ENCODE measurements at regions of chr5 and their contacts with region 1.

Region 1: GRCh38 chr5:160539431-160539830 is 117.8 kb downstream of the PTTG1 start:
- DNase-seq: peak; percentile 84
- H3K4me3 Mint-ChIP-seq: no peak overlapping the region
- H3K27ac Mint-ChIP-seq: no peak overlapping the region
- H3K4me1 Mint-ChIP-seq: peaks cover 24% of the 10 kb centered on the region
- H3K27me3 Mint-ChIP-seq: no peaks in the 10 kb centered on the region

Region 2: DNA sequence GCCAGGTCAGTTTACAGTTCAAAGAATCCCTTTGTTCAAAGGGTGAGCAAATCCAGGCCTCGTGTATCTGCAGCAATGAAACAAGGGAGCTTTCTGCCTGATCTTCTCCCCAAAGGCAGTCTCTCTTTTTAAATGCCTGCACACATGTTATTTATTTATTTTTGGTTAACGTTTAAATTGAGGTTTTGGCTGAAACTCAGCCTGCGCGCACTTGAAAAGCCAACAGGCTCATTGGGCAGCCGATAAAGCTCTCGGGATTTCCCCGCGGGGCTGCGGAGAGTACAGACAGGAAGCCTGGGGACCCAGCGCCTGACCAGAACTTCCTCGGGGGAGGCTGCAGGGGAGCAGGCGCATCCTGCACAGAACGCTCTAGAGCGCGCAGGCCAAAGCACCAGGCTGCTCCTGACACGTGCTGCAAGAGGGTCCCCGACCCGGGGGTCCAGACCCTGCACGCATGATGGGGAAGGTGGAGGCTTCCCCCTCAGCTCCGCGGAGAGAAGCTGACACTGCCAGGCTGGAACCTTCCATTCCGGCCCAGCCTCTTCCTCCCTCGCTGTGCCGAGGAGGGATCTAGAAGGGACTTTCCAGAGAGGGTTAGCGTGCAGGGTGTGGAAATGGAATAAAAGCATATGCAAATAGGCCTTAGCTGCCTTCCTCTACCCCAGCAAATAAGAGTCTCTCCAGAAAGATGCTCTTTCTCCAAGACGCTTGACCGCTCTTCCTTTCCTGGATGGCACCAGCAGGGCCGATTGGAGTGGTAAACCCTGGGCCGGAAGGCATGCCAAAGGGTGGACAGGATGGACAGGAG is 71.7 kb before region 1 on chr5:
- CTCF ChIA-PET with region 1: no interaction called
- POLR2A ChIA-PET with region 1: interaction called, 11 read pairs
- intact Hi-C with region 1: loop called (anchors 1 kb)
- DNase-seq: peak; percentile 91
- H3K4me3 Mint-ChIP-seq: peak overlapping the region; percentile 98
- H3K27ac Mint-ChIP-seq: peak overlapping the region; percentile 98
- H3K4me1 Mint-ChIP-seq: peaks cover 65% of the 10 kb centered on the region
- H3K27me3 Mint-ChIP-seq: no peaks in the 10 kb centered on the region

Region 3: DNA sequence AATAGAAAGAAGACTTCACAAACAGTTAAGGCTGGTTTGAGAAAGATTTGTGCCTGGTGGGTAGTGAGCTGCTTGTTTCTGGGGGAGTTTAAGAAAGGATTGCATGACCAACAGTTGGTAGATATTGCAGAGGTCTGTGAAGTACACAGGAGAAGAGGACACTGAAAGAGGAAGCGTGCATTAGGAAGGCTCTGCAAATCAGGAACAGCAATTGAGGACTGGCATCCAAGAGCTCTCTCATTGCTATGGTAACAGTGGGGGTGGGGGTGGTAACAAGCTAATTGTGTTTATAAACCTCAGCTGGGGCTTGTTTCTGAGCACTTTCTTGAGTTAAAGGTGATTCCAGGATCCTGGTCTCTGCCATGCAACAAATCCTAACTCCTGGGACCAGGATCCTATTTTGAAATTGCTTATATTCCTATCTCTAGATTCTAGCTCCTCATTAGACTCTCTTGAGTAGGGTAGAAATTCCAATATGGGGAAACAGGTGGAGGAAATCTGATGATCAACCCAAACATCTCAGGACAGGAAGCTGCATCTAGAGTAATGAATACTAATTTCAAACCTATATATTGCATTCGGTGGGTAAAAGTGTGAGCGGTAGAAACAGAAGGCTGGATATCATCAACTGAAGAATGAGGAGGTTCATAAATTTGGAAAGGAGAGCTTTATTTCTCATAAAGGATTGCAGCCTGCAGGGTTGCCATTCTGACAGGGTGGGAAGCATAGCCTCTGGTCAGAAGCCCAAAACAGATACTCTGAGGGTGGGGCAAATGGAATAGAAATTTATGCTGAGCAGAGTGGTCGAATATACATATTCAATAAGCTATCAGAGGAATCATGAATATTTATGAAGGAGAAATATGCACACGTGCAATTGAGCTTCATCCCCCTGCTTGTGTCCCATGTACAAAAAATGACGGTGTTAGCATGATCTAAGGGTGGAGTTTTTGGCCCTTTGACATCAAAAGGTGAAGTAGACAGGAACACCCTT is 38.3 kb before region 1 on chr5:
- CTCF ChIA-PET with region 1: no interaction called
- POLR2A ChIA-PET with region 1: no interaction called
- intact Hi-C with region 1: loop called (anchors 1 kb)
- DNase-seq: no peak
- H3K4me3 Mint-ChIP-seq: no peak overlapping the region
- H3K27ac Mint-ChIP-seq: no peak overlapping the region
- H3K4me1 Mint-ChIP-seq: peaks cover 17% of the 10 kb centered on the region
- H3K27me3 Mint-ChIP-seq: no peaks in the 10 kb centered on the region

Region 4: DNA sequence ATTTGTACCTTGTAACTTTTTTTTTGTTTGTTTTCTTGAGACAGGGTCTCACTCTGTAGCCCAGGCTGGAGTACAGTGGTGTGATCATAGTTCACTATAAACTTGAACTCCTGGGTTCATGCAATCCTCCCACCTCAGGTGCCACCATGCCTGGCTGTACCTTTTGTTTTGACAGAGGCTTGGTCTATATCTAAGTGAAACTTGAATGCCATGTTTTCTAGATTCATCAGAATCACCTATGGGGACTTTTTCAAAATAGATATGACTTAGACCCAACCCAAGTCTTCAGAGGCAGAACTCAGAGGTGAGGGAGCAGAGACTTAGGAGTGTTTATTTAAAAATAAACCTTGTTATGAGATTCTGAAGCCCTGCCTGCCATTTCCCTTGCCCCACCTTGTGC is 10.6 kb after region 1 on chr5:
- CTCF ChIA-PET with region 1: interaction called, 4 read pairs
- POLR2A ChIA-PET with region 1: no interaction called
- intact Hi-C with region 1: loop called (anchors 1 kb)
- DNase-seq: peak; percentile 19
- H3K4me3 Mint-ChIP-seq: no peak overlapping the region
- H3K27ac Mint-ChIP-seq: no peak overlapping the region
- H3K4me1 Mint-ChIP-seq: peaks cover 24% of the 10 kb centered on the region
- H3K27me3 Mint-ChIP-seq: peaks cover 8% of the 10 kb centered on the region

Region 5: GRCh38 chr5:160605266-160605665 is 65.8 kb after region 1 on chr5:
- CTCF ChIA-PET with region 1: no interaction called
- POLR2A ChIA-PET with region 1: no interaction called
- intact Hi-C with region 1: loop called (anchors 1 kb)
- DNase-seq: no peak
- H3K4me3 Mint-ChIP-seq: no peak overlapping the region
- H3K27ac Mint-ChIP-seq: no peak overlapping the region
- H3K4me1 Mint-ChIP-seq: peaks cover 3% of the 10 kb centered on the region
- H3K27me3 Mint-ChIP-seq: no peaks in the 10 kb centered on the region